SK-N-SH (cell line): ENCODE measurements at regions of chr3 and their contacts with region 1.

Region 1: GRCh38 chr3:128095222-128095703 is 28.3 kb downstream of the RUVBL1 start:
- DNase-seq: peak; percentile 86
- H3K4me3 ChIP-seq: no peak overlapping the region; a peak in 1 of 4 replicates
- H3K27ac ChIP-seq: peak overlapping the region; percentile 43 to 80; a peak in 3 of 4 replicates
- H3K4me1 ChIP-seq: peaks cover 9 to 12% of the 10 kb centered on the region in 2 experiments; a peak in 1 of 4 replicates
- H3K27me3 ChIP-seq: no peaks in the 10 kb centered on the region
- CTCF ChIP-seq: peak; percentile 94
- EP300 ChIP-seq: no peak
- RAD21 ChIP-seq: peak; percentile 95

Region 2: GRCh38 chr3:128068211-128068620 is 27.0 kb before region 1 on chr3:
- CTCF ChIA-PET with region 1: interaction called, 15 read pairs
- POLR2A ChIA-PET with region 1: no interaction called
- DNase-seq: peak; percentile 77
- H3K4me3 ChIP-seq: peak overlapping the region in 1 of 2 experiments; percentile 39; a peak in 1 of 4 replicates
- H3K27ac ChIP-seq: no peak overlapping the region
- H3K4me1 ChIP-seq: peaks cover 0 to 21% of the 10 kb centered on the region in 2 experiments; a peak in 1 of 4 replicates
- H3K27me3 ChIP-seq: no peaks in the 10 kb centered on the region
- CTCF ChIP-seq: peak; percentile 73
- EP300 ChIP-seq: no peak
- RAD21 ChIP-seq: peak; percentile 54

Region 3: GRCh38 chr3:128080320-128081080 is 14.8 kb before region 1 on chr3:
- CTCF ChIA-PET with region 1: interaction called, 24 read pairs
- POLR2A ChIA-PET with region 1: no interaction called
- DNase-seq: no peak
- H3K4me3 ChIP-seq: no peak overlapping the region
- H3K27ac ChIP-seq: peak overlapping the region; percentile 39 to 85
- H3K4me1 ChIP-seq: peaks cover 0 to 18% of the 10 kb centered on the region in 2 experiments; a peak in 3 of 4 replicates
- H3K27me3 ChIP-seq: no peaks in the 10 kb centered on the region
- CTCF ChIP-seq: no peak
- EP300 ChIP-seq: 0 out of 4 replicates have a peak, but pooled peaks of 1 of the 2 experiments have one; percentile 50
- RAD21 ChIP-seq: no peak

Region 4: GRCh38 chr3:128112357-128112968 is 17.2 kb after region 1 on chr3:
- CTCF ChIA-PET with region 1: interaction called, 89 read pairs
- POLR2A ChIA-PET with region 1: interaction called, 3 read pairs
- DNase-seq: peak; percentile 78
- H3K4me3 ChIP-seq: no peak overlapping the region
- H3K27ac ChIP-seq: peak overlapping the region; percentile 93 to 97
- H3K4me1 ChIP-seq: peaks cover 24 to 51% of the 10 kb centered on the region in 2 experiments
- H3K27me3 ChIP-seq: no peaks in the 10 kb centered on the region
- CTCF ChIP-seq: peak; percentile 18; the same call in 1 of the 2 replicates
- EP300 ChIP-seq: peak; percentile 77 to 92
- RAD21 ChIP-seq: peak; percentile 10; the same call in 1 of the 2 replicates

Region 5: GRCh38 chr3:128123538-128124368 is 28.5 kb after region 1 on chr3 and contains the start of gene RUVBL1:
- CTCF ChIA-PET with region 1: interaction called, 89 read pairs
- POLR2A ChIA-PET with region 1: no interaction called
- DNase-seq: peak; percentile 96
- H3K4me3 ChIP-seq: peak within 1 kb of the TSS; percentile 98 to 99
- H3K27ac ChIP-seq: peak within 1 kb of the TSS; percentile 82 to 93
- H3K4me1 ChIP-seq: peaks cover 0 to 14% of the 10 kb centered on the region in 2 experiments; a peak in 2 of 4 replicates
- H3K27me3 ChIP-seq: no peaks in the 10 kb centered on the region
- CTCF ChIP-seq: no peak
- EP300 ChIP-seq: no peak
- RAD21 ChIP-seq: no peak
- polyA plus RNA-seq, gene RUVBL1: 140 and 145 TPM in 2 replicates

Region 6: GRCh38 chr3:128133273-128134084 is 38.2 kb after region 1 on chr3:
- CTCF ChIA-PET with region 1: interaction called, 63 read pairs
- POLR2A ChIA-PET with region 1: interaction called, 5 read pairs
- DNase-seq: peak; percentile 44
- H3K4me3 ChIP-seq: no peak overlapping the region
- H3K27ac ChIP-seq: no peak overlapping the region
- H3K4me1 ChIP-seq: no peaks in the 10 kb centered on the region
- H3K27me3 ChIP-seq: no peaks in the 10 kb centered on the region
- CTCF ChIP-seq: peak; percentile 83
- EP300 ChIP-seq: no peak
- RAD21 ChIP-seq: peak; percentile 90

Region 7: DNA sequence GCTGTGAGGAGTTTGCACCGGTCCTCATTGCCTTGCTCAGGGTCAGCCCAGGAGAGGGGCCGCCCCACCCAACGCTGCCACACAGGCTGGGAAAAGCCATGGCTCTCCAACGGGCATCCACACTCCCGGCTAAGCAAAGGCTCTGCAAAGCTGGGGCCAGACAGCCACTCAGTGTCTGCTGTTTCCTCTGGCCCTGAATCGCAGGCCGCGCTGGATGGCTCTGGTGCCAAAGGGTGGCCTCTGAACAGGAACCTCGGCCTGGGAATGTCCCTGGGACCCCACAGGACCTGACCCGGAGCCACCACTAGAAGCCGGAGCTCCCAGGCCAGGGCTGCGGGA is 512.4 kb after region 1 on chr3:
- CTCF ChIA-PET with region 1: interaction called, 13 read pairs
- POLR2A ChIA-PET with region 1: no interaction called
- DNase-seq: no peak
- H3K4me3 ChIP-seq: no peak overlapping the region
- H3K27ac ChIP-seq: no peak overlapping the region
- H3K4me1 ChIP-seq: peaks cover 0 to 22% of the 10 kb centered on the region in 2 experiments; a peak in 1 of 4 replicates
- H3K27me3 ChIP-seq: no peaks in the 10 kb centered on the region
- CTCF ChIP-seq: no peak
- EP300 ChIP-seq: no peak
- RAD21 ChIP-seq: no peak